Activated CD4-positive, alpha-beta memory T cell treated with anti-CD3 and anti-CD28 coated beads for 36 hours (primary cell): ENCODE measurements at regions of chr12 and their contacts with region 1.

Region 1: GRCh38 chr12:4506870-4507269 is 31.8 kb upstream of the RAD51AP1 start:
- DNase-seq: no peak
- H3K4me3 Mint-ChIP-seq: no peak overlapping the region
- H3K27ac Mint-ChIP-seq: peak overlapping the region; percentile 2
- H3K4me1 Mint-ChIP-seq: peaks cover 22% of the 10 kb centered on the region
- H3K27me3 Mint-ChIP-seq: no peaks in the 10 kb centered on the region

Region 2: GRCh38 chr12:3752741-3753486 is 754.0 kb before region 1 on chr12 and contains the start of gene CRACR2A:
- CTCF ChIA-PET with region 1: no interaction called
- POLR2A ChIA-PET with region 1: no interaction called
- intact Hi-C with region 1: loop called (anchors 5 kb)
- DNase-seq: peak; percentile 89
- H3K4me3 Mint-ChIP-seq: peak within 1 kb of the TSS; percentile 89
- H3K27ac Mint-ChIP-seq: peak within 1 kb of the TSS; percentile 93
- H3K4me1 Mint-ChIP-seq: peaks cover 51% of the 10 kb centered on the region
- H3K27me3 Mint-ChIP-seq: no peaks in the 10 kb centered on the region
- total RNA-seq, gene CRACR2A: 15.8 to 19.1 TPM

Region 3: DNA sequence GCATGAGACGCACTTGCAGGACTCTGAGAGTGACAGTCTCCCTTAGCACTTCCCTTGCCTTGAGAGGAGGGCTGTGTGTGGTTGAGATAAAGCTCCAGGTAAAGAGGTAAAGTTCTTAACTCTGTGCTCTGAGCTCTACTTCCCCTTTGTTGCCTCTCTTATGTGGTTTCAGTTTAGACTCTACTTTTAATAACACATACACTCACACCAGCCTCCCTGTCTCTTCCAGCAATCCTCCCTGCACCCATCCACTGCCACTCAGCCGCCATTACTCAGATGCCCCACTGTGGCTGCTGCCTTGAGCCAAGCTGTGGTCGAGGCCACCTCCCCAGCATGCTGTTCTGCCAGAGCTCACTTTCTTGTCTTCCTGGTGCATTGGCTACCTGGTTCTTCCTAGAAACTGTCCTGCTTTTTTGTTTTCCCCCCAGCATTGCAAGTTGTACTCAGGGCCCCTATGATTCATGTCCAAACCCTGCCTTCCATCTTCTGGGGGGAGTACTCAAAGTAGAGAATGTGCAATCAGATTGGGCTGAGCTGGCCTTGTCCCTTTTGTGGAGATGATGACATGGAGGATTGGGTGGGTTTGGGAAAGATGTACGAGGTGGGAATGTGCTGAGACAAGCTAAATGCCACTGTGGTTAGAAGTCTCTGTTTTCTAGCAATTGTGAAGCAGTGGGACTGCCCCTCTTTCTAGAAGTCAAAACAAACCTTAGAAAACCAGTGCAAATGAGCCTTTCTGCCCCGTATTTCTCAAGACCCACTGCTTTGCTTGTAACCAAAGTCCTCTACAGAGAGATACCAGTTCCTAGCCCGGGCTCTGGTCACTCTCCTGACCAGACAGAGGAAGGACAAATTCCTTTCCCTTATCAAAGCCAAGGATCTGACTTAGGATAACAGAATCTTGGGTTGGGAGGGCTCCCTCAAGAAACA is 518.1 kb before region 1 on chr12:
- CTCF ChIA-PET with region 1: no interaction called
- POLR2A ChIA-PET with region 1: no interaction called
- intact Hi-C with region 1: loop called (anchors 10 kb)
- DNase-seq: peak; percentile 57
- H3K4me3 Mint-ChIP-seq: no peak overlapping the region
- H3K27ac Mint-ChIP-seq: peak overlapping the region; percentile 47
- H3K4me1 Mint-ChIP-seq: peaks cover 30% of the 10 kb centered on the region
- H3K27me3 Mint-ChIP-seq: no peaks in the 10 kb centered on the region

Region 4: DNA sequence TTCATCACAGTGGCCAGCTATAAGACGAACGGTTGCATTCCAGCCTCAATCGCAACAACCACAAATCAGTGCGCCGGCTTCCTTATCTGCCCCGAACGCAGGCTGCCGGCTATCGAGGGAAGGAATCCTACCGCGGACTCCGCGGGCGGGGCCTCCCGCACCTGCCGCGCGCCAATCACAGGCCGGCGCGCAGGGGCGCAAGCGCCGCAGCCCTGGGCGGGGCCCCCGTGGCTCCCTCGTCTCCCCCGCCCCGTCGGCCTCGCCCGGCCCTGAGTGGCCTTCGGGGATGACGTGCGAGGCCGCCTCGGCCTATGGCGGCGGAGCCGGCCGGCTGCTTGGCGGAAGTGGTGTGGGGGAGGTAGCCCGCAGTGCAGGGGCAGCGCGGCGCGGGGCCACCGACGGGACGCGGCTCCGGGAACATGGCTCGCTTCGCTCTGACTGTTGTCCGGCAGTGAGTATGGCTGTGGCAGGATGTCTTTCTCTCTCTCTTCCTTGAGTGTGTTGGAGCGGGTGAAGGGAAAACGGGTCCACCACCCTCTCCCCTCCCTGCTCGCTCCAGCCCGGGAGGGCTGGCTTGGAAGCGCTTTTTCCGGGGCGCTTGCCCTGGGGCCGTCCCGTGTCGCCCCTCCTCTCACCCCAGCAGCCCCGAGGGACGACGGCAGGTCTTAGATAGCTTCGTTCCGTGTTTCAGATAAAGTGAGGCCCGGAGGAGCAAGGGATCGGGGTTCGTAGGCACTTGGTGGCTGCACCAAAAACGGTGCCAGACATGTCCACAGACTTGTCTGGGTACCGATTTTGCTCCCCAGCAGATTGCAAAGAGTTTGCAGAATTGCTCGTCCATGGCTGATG is 185.8 kb before region 1 on chr12 and contains the start of gene TIGAR:
- CTCF ChIA-PET with region 1: no interaction called
- POLR2A ChIA-PET with region 1: no interaction called
- intact Hi-C with region 1: loop called (anchors 2 kb)
- DNase-seq: peak; percentile 94
- H3K4me3 Mint-ChIP-seq: peak within 1 kb of the TSS; percentile 94
- H3K27ac Mint-ChIP-seq: peak within 1 kb of the TSS; percentile 87
- H3K4me1 Mint-ChIP-seq: peaks cover 34% of the 10 kb centered on the region
- H3K27me3 Mint-ChIP-seq: no peaks in the 10 kb centered on the region
- total RNA-seq, gene TIGAR: 12.0 to 13.6 TPM

Region 5: DNA sequence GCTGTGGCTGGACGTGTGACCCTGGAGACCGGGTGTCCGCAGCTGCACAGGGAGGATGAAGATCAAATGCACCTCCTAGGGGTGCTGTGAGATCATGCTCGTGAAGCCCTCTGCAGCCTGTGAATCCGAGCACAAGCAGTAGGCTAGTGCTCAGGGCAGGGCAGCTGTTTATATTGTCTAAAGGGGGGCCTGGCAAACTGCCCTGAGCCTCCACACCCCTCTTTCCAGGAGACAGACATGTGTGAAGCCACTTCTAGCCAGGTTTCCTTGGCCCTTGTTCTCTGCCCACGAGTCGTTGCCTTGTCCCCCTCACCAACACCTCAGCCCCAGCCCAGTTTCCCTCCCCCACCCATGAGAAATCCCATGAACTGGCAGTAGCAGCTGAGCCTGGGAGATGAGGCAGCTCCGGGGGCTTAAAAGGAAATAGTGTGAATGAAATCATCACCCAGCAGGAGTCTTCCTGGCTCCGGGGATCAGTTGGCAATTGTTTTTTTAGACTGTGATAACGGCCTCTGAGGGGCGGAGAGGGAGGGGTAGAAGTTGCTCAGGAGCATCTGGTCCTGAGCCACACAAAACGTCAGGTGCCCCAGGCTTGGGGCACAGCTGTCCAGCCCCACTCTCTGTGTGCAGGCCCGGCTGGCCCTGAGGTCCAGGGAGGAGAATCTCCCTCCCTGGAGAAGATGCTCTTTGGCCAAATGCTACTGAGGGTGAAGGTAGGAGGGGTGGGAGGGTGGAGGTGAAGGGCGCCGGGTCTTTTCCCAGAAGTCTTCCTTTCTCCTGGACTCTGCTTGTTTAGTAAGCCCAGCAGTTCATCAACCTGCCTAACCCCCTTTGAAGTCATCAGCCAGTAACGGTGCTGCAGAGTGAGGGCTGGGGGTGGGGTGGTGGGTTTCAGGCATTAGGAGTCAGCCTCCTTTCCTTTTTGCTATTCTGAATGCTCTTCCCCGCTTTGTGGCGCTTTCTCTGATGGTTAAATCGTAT is 65.2 kb before region 1 on chr12:
- CTCF ChIA-PET with region 1: no interaction called
- POLR2A ChIA-PET with region 1: no interaction called
- intact Hi-C with region 1: no loop called
- DNase-seq: no peak
- H3K4me3 Mint-ChIP-seq: no peak overlapping the region
- H3K27ac Mint-ChIP-seq: no peak overlapping the region
- H3K4me1 Mint-ChIP-seq: peaks cover 3% of the 10 kb centered on the region
- H3K27me3 Mint-ChIP-seq: peaks cover 5% of the 10 kb centered on the region

Region 6: DNA sequence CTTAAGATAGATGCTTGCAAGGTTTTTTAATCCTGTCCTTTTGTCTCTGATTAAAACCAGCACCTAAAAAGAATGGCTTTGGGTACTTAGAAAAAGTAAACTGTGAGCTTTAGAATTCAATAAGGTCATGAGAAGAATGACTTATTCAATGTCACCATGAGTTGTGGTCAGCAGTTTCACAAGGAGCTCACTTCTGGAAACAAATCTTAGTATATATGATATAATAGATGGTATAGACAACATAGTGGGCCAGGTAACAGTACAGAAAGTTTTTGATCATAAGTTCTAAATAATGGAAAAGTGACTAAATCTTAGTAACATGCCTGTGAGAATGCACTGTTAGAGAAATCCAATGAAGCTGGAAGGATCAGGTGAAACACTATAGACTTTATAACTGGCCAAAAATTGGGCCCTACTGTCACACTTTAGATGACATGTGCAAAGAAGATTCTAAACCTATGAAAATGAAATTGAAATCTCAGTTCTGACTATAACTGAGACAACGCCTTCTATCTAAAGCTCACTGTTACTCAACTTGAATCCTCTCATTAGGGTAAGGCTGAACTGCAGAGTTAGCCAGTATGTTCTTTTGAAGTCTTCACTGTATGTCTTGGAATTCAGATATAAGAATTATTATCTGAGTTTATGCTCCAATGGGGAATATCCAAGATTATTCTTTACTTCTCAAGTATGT is 10.6 kb before region 1 on chr12:
- CTCF ChIA-PET with region 1: no interaction called
- POLR2A ChIA-PET with region 1: interaction called, 24 read pairs
- intact Hi-C with region 1: no loop called
- DNase-seq: no peak
- H3K4me3 Mint-ChIP-seq: no peak overlapping the region
- H3K27ac Mint-ChIP-seq: no peak overlapping the region
- H3K4me1 Mint-ChIP-seq: peaks cover 16% of the 10 kb centered on the region
- H3K27me3 Mint-ChIP-seq: no peaks in the 10 kb centered on the region

Region 7: GRCh38 chr12:4538207-4539160 is 31.6 kb after region 1 on chr12 and contains the start of gene RAD51AP1:
- CTCF ChIA-PET with region 1: no interaction called
- POLR2A ChIA-PET with region 1: interaction called, 6 read pairs
- intact Hi-C with region 1: loop called (anchors 2 kb)
- DNase-seq: peak; percentile 97
- H3K4me3 Mint-ChIP-seq: peak within 1 kb of the TSS; percentile 94
- H3K27ac Mint-ChIP-seq: peak within 1 kb of the TSS; percentile 98
- H3K4me1 Mint-ChIP-seq: peaks cover 25% of the 10 kb centered on the region
- H3K27me3 Mint-ChIP-seq: no peaks in the 10 kb centered on the region
- total RNA-seq, gene RAD51AP1: 44.6 to 49.7 TPM

Region 8: DNA sequence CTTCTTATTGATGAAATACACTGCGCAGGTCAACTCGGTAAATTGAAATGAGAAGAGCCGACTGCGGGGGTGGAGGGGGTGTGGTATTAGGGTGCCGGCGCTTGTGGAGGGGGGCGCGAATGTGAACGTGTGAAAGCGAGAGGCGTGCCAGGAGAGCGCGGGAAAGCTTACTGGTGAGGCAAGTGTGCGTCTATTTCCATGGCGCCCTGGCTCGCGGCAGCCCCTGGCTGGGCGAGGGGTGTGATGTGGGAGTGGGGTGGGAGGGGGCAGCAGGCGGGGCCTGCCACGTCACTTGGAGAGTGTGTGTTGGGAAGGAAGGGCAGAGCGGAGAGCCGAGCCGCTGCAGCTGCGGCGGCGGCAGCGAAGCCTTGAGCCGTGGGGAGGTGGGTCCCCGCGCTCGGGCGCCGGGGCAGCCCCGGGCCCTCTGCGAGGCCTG is 302.2 kb after region 1 on chr12:
- CTCF ChIA-PET with region 1: no interaction called
- POLR2A ChIA-PET with region 1: no interaction called
- intact Hi-C with region 1: loop called (anchors 5 kb)
- DNase-seq: peak; percentile 28
- H3K4me3 Mint-ChIP-seq: peak overlapping the region; percentile 13
- H3K27ac Mint-ChIP-seq: no peak overlapping the region
- H3K4me1 Mint-ChIP-seq: peaks cover 40% of the 10 kb centered on the region
- H3K27me3 Mint-ChIP-seq: peaks cover 23% of the 10 kb centered on the region

Region 9: GRCh38 chr12:5309654-5310053 is 802.8 kb after region 1 on chr12:
- CTCF ChIA-PET with region 1: no interaction called
- POLR2A ChIA-PET with region 1: no interaction called
- intact Hi-C with region 1: no loop called
- DNase-seq: no peak
- H3K4me3 Mint-ChIP-seq: no peak overlapping the region
- H3K27ac Mint-ChIP-seq: no peak overlapping the region
- H3K4me1 Mint-ChIP-seq: no peaks in the 10 kb centered on the region
- H3K27me3 Mint-ChIP-seq: no peaks in the 10 kb centered on the region